GM12878 (cell line): ENCODE measurements at regions of chr3 and their contacts with region 1.

Region 1: DNA sequence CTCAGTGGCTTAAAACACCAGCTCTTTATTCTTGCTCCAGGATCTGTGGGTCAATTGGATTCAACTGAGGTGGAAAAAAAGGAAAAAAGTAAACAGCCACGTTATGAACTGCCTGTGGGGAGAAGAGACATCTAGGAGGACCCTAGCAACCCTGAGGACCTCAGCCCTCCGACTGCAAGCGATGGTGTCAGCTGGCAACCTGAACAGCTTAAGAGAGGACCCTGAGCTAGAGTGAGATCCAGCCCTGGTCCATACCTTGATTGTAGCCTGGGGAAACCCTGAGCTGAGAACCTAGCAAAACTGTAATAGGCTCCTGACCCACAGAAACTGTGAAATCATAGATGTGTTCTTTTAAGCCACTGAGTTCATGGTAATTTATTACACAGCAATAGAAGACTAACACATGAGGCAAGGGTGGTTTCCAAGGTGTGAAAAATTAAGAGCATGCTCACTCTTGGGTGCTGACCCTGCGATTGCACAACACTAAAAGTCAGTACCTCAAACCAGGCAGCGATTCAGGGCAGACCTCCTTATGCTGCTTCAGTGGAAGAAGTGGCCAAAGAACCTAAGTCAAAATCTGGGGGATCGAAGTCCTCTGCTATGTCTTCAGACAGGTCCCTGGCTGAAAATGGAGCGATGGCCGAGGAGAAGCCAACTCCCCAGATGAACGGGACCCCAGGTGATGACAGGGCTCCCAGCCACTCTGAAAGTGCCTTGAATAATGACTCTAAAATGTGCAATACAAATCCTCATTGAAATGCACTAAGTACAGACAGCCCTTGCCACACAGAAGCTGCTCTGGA is 57.7 kb downstream of the GASK1A start:
- DNase-seq: peak; percentile 4
- ATAC-seq: peak; percentile 87
- H3K4me3 ChIP-seq: no peak overlapping the region
- H3K27ac ChIP-seq: no peak overlapping the region
- H3K4me1 ChIP-seq: no peaks in the 10 kb centered on the region
- H3K27me3 ChIP-seq: peaks cover 0 to 1% of the 10 kb centered on the region in 2 experiments; a peak in 3 of 4 replicates
- CTCF ChIP-seq: no peak
- EP300 ChIP-seq: peak in 1 of 2 experiments; percentile 17; a peak in 1 of 4 replicates
- POLR2A ChIP-seq: no peak
- RAD21 ChIP-seq: no peak

Region 2: DNA sequence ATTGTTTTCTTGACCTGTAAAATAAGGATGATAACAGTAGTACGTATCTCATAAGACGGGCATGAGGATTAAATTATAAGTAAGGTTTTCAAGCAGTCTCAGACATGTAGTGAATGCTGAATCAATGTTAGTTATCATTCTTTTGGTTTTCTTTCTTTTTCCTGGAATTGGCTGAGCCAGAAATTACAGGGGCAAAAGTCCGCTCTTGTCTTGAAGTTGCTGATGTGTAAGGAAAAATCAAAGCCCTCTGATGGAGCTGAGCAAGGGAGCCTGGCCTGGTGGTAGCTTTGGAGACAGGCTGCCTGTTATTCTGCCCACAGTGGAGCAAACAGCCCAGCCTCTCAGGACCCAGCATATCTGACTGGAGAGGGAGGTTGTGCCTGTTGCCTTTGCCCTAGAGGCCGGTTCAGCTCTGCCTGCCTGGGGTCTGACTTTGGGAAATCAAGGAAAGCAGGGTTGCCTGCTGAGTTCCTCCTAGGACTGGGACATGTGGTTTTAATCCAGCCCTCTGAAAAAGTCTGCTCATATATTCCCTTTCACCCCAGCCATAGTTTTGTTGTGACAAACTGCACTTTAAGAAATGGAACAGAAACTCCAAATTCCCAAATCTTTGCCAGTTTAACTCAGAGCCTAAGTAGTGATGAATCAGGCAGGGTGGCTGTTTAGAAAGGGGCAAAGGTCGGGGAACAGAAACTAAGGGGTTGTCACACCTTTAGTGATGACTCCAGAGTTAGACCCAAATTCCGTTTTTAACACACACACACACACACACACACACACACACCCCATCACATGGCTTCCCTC is 17.6 kb before region 1 on chr3:
- CTCF ChIA-PET with region 1: interaction called, 4 read pairs
- POLR2A ChIA-PET with region 1: interaction called, 4 read pairs
- RAD21 ChIA-PET with region 1: interaction called, 7 read pairs
- SMC1A ChIA-PET with region 1: interaction called, 15 read pairs
- in situ Hi-C with region 1: no loop called
- intact Hi-C with region 1: no loop called
- DNase-seq: no peak
- ATAC-seq: 0 out of 3 replicates have a peak, but pooled peaks have one; percentile 24
- H3K4me3 ChIP-seq: no peak overlapping the region
- H3K27ac ChIP-seq: no peak overlapping the region
- H3K4me1 ChIP-seq: no peaks in the 10 kb centered on the region
- H3K27me3 ChIP-seq: no peaks in the 10 kb centered on the region
- CTCF ChIP-seq: no peak
- EP300 ChIP-seq: no peak
- POLR2A ChIP-seq: no peak
- RAD21 ChIP-seq: no peak

Region 3: GRCh38 chr3:43024181-43024885 is 12.5 kb before region 1 on chr3:
- CTCF ChIA-PET with region 1: interaction called, 4 read pairs
- POLR2A ChIA-PET with region 1: interaction called, 4 read pairs
- RAD21 ChIA-PET with region 1: interaction called, 7 read pairs
- SMC1A ChIA-PET with region 1: interaction called, 15 read pairs
- in situ Hi-C with region 1: no loop called
- intact Hi-C with region 1: no loop called
- DNase-seq: no peak
- ATAC-seq: peak; percentile 91
- H3K4me3 ChIP-seq: no peak overlapping the region
- H3K27ac ChIP-seq: no peak overlapping the region
- H3K4me1 ChIP-seq: no peaks in the 10 kb centered on the region
- H3K27me3 ChIP-seq: no peaks in the 10 kb centered on the region
- CTCF ChIP-seq: no peak
- EP300 ChIP-seq: no peak
- POLR2A ChIP-seq: no peak
- RAD21 ChIP-seq: no peak